Aorta (tissue), 5 donors: ENCODE measurements at regions of chr9 and their contacts with region 1.

Region 1: DNA sequence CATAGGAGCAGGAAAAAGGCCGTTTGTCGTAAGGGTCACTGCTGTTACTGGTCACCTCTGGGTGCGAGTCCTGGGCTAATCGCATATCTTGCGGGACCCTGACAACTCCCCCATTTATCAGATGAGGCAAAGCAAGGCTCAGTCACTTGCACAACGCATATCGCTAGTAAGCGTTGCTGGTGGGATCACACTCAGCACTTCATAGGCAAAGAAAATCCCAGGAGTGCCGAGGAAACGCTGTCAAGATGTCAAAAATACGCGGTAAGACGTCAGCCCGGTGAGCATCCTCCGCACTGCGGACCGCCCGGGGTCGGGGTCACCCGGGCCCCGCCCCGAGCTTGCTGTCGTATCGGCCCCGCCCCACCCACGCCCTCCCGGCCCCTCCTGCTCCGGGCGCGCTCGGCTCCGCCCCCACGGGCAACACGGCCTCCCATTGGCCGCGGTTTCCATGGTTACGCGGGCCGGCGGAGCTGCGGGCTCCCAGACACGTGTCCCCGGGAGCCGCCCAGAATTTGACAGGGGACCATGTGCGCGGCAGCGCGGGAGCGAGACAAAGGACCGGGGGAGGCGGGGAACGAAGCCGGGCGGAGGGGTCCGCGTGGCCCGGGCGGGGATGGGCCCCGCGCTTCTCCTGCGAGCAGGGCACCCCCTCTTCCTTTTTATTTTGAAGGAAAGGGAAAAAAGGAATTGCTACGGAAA is 80.2 kb upstream of the IER5L start:
- DNase-seq: peak; percentile 94 to 97
- ATAC-seq: peak; percentile 86
- H3K4me3 ChIP-seq: no peak overlapping the region
- H3K27ac ChIP-seq: no peak overlapping the region
- H3K4me1 ChIP-seq: no peaks in the 10 kb centered on the region
- H3K27me3 ChIP-seq: no peaks in the 10 kb centered on the region

Region 2: DNA sequence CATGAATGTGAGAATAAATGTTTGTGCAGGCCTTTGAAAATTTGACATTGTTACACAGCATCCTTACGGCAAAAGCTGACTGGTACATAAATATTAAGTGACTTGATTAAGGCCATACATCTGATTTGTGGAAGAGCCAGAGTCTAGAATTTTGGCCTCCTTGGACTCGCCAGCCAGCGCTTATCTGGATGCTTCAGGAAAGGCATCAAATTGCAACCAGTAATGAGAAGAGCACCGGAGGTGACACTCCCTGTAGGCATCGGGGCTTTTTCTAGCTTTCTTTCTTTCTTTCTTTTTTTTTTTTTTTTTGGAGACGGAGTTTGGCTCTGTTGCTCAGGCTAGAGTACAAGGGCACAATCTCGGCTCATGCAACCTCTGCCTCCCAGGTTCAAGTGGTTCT is 67.0 kb before region 1 on chr9:
- intact Hi-C with region 1: no loop called
- DNase-seq: no peak
- ATAC-seq: no peak
- H3K4me3 ChIP-seq: no peak overlapping the region
- H3K27ac ChIP-seq: no peak overlapping the region
- H3K4me1 ChIP-seq: no peaks in the 10 kb centered on the region
- H3K27me3 ChIP-seq: no peaks in the 10 kb centered on the region

Region 3: DNA sequence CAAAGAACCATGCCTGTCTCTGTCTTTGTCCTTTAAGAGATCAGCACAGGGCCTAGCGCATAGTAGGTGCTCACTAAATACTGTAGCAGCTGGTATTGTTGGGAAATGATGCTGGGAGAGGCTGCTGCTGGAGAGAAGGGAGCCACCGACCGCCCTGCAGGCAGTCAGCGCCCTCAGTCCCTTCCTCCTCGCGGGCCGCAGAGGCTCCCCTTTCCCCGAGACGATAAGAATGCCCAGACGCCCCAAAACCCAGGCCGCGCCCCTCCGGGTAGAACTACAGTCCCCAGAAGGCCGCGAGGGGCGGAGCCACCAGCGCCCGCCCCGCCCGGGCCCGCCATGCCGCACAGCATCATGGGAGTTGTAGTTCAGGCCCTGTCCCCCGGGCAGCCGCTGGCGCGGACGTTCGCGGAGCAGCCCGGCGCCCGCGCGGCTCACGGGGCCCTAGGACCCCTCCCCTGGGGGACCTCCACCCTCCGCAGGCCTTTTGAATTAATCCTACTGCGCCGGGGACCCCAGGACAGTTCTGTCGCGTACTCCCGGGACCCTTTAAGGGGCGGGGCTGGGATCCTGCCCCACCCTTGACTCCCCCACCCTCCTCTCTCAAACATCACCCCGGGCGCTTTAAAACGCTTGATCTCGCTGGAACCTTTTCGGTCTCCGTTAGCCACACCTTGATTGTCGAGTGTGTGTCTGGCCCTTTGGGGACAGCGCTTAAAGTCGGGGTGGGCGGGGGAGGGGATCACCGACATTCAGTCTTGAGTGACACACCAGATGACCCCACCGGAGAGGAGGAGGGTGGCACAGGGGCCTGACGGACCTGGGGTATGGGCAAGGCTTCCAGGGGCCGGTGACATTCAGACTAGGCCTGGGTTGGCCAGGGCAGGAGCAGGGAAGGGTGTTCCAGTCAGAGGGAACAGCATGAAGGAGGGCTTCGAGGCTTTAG is 55.4 kb before region 1 on chr9:
- intact Hi-C with region 1: loop called in 1 of 2 experiments (anchors 5 kb)
- DNase-seq: peak; percentile 92 to 97
- ATAC-seq: peak; percentile 91
- H3K4me3 ChIP-seq: peak overlapping the region; percentile 61 to 88
- H3K27ac ChIP-seq: peak overlapping the region in 1 of 2 donors; percentile 89
- H3K4me1 ChIP-seq: no peaks in the 10 kb centered on the region
- H3K27me3 ChIP-seq: no peaks in the 10 kb centered on the region

Region 4: GRCh38 chr9:129221233-129221632 is 37.0 kb before region 1 on chr9:
- intact Hi-C with region 1: no loop called
- DNase-seq: no peak
- ATAC-seq: no peak
- H3K4me3 ChIP-seq: no peak overlapping the region
- H3K27ac ChIP-seq: no peak overlapping the region
- H3K4me1 ChIP-seq: no peaks in the 10 kb centered on the region
- H3K27me3 ChIP-seq: no peaks in the 10 kb centered on the region

Region 5: DNA sequence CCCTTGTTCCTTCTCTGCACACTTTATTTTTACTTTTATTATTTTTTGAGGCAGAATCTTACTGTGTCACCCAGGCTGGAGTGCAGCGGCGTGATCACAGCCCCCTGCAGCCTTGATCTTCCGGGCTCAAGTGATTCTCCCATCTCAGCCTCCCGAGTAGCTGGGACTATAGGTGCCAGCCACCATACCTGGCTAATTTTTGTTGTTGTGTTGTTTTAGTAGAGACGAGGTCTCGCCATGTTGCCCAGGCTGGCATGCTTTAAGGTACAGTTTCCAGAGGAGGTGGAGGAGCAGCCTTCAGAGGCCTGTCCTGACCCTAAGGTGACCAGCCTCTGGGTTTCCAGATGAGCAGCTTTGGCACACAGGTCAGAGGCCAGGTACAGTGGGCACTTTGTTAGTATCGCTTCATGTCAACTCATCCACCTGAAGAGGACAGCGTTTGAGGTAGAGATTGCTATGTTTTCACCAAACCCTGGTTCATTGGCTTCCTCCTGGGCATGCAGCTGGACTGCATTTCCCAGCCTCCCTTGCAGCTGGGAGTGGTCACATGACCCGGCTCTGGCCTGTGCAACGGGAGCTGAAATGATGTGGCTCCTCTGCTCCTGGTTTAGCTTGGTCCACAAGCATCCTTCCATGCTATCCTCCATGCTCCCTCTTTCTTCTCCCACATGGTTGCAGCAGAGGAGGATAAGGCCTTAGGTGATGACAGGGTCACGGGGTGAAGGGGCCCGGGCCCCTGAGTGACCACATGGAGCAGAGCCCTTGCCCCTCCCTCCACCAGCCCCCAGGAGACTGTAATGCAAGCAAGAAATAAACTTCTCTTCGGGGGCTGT is 59.1 kb after region 1 on chr9:
- intact Hi-C with region 1: loop called (anchors 5 kb)
- DNase-seq: peak; percentile 75 to 78
- ATAC-seq: no peak
- H3K4me3 ChIP-seq: no peak overlapping the region
- H3K27ac ChIP-seq: peak overlapping the region in 1 of 2 donors; percentile 61
- H3K4me1 ChIP-seq: no peaks in the 10 kb centered on the region
- H3K27me3 ChIP-seq: no peaks in the 10 kb centered on the region

Region 6: DNA sequence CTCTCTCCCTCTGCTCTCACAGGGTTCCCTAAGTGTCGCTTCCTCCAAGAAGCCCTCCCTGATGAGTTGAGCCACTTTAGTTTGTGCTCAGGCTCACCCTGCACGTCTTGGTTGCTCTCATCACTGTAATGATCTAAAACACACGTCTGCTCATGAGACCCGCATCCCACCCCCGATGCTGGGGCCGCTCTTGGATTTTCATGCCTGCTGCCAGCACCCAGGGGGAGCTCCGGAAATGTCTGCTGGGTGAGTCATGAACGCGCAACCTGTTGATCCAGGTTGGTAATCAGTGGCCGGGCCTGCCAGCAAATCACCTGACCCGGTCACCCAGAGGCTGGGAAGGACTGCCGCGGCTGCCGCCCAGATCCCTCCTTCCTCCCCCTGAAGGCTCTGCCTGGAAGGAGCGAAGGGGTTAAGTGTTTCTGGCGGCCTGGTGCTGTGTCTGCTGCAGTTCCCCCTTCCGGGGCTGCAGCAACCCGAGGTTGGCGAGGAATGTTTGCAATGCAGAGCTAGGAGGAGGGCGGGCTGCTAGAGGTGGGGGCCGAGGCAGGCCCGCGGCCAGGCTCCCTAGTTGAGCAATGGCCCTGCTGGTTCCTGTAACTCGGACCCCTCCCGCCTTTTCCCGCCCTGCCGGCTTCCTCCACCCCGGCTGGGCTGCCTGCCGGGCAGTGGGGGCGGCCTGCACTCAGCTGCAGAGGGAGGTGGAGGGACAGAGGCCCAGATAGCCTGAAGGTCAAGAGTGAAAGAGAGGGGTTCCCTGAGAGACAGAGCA is 75.9 kb after region 1 on chr9:
- intact Hi-C with region 1: loop called in 1 of 2 experiments (anchors 5 kb)
- DNase-seq: peak; percentile 96 to 98
- ATAC-seq: peak; percentile 93
- H3K4me3 ChIP-seq: no peak overlapping the region
- H3K27ac ChIP-seq: peak overlapping the region; percentile 46 to 99
- H3K4me1 ChIP-seq: no peaks in the 10 kb centered on the region
- H3K27me3 ChIP-seq: no peaks in the 10 kb centered on the region